ENCODE measurements at regions of chr19 and their contacts with region 1.

Region 1: DNA sequence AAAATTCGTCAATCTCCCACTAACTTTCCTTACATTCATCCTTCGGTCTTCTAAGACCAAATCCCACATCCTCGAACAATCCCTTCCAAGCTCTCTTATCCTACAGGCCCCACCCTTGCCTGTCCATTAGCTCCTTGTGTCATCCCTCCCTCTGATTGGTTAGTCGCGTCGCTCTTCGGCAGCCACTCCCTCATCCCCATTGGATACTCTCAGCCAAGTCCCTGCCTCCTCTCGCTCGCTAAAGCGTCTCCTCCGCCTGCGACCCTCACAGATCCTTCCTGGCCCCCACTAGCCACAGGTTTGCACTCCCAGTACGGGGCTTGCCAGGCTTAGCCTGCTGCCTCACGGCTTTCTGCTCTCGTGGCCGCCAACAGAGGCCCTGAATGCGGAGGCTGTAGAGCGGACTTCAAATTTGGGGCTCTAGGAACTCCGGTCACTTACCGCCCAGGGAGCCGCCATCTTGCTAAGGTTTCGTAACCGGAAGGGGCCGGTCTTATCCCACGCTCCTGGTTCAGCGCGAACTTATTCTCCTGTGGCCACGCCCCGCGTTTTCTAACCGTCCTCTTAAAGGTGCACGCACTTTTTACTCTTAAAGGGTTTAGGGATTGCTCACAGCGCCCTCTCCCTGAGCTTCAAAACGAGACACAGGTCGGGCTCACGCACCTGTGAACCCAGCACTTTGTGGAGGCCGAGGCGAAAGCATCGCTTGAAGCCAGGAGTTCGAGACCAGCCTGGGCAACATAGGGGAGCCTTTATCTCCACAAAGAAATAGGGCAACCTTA is at the start of gene DMAC2:
- DNase-seq: peak; percentile 98
- H3K4me3 Mint-ChIP-seq: no peak within 1 kb of the TSS
- H3K27ac Mint-ChIP-seq: no peak within 1 kb of the TSS
- H3K4me1 Mint-ChIP-seq: peaks cover 14% of the 10 kb centered on the region
- H3K27me3 Mint-ChIP-seq: peaks cover 9% of the 10 kb centered on the region
- total RNA-seq, gene DMAC2: 36.0 to 38.4 TPM

Region 2: GRCh38 chr19:41363753-41364523 is 75.7 kb before region 1 on chr19 and contains the start of gene B9D2:
- CTCF ChIA-PET with region 1: interaction called, 26 read pairs
- POLR2A ChIA-PET with region 1: interaction called, 10 read pairs
- DNase-seq: peak; percentile 98
- H3K4me3 Mint-ChIP-seq: peak within 1 kb of the TSS; percentile 87
- H3K27ac Mint-ChIP-seq: peak within 1 kb of the TSS; percentile 93
- H3K4me1 Mint-ChIP-seq: peaks cover 40% of the 10 kb centered on the region
- H3K27me3 Mint-ChIP-seq: no peaks in the 10 kb centered on the region
- total RNA-seq, gene B9D2: 10.8 to 11.2 TPM

Region 3: DNA sequence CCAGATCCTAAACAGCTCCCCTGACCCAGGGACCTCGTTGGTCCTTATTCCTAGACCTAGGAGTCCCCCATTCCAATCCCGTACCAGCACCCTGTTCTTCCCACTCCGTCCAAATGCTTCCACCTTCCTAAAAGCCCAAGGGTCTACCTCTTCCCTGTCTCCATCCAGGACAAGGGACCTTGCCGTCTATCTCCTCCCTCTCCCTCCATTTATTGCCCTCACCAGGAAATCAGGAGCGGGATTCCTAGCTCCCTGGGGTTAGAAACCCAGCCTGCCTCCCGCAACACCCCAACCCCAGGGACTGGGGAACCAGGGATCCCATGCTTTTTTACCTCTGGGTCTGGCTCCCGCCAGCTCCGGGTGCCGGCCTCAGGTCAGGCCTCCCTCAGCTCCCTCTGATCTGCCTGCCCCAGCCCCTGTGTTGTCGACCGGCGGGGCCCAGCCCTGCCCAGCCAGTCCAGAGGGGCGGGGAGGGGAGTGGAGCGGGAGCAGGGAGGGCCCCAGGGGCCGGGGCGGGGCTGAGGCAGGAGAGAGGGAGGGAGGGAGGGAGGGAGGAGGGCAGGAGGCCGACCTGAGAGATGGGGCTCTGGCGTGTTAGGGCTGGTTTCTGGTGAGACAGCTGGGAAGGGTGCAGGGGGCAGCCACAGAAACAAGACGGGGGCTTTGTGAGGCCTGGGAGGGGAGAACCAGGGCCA is 12.5 kb before region 1 on chr19 and contains the start of gene B3GNT8:
- CTCF ChIA-PET with region 1: interaction called, 9 read pairs
- POLR2A ChIA-PET with region 1: interaction called, 30 read pairs
- DNase-seq: peak; percentile 67
- H3K4me3 Mint-ChIP-seq: peak within 1 kb of the TSS; percentile 80
- H3K27ac Mint-ChIP-seq: peak within 1 kb of the TSS; percentile 81
- H3K4me1 Mint-ChIP-seq: peaks cover 45% of the 10 kb centered on the region
- H3K27me3 Mint-ChIP-seq: no peaks in the 10 kb centered on the region
- total RNA-seq, gene B3GNT8: 4.3 to 5.4 TPM

Region 4: GRCh38 chr19:41457241-41457640 is 17.6 kb after region 1 on chr19:
- CTCF ChIA-PET with region 1: interaction called, 18 read pairs
- POLR2A ChIA-PET with region 1: interaction called, 16 read pairs
- DNase-seq: no peak
- H3K4me3 Mint-ChIP-seq: peak overlapping the region; percentile 45
- H3K27ac Mint-ChIP-seq: peak overlapping the region; percentile 78
- H3K4me1 Mint-ChIP-seq: peaks cover 45% of the 10 kb centered on the region
- H3K27me3 Mint-ChIP-seq: peaks cover 3% of the 10 kb centered on the region

Region 5: GRCh38 chr19:41505105-41505504 is 65.5 kb after region 1 on chr19:
- CTCF ChIA-PET with region 1: no interaction called
- POLR2A ChIA-PET with region 1: no interaction called
- DNase-seq: no peak
- H3K4me3 Mint-ChIP-seq: no peak overlapping the region
- H3K27ac Mint-ChIP-seq: no peak overlapping the region
- H3K4me1 Mint-ChIP-seq: no peaks in the 10 kb centered on the region
- H3K27me3 Mint-ChIP-seq: peaks cover 22% of the 10 kb centered on the region